Heart left ventricle (tissue), 16 donors: ENCODE measurements at regions of chr4 and their contacts with region 1.

Region 1: DNA sequence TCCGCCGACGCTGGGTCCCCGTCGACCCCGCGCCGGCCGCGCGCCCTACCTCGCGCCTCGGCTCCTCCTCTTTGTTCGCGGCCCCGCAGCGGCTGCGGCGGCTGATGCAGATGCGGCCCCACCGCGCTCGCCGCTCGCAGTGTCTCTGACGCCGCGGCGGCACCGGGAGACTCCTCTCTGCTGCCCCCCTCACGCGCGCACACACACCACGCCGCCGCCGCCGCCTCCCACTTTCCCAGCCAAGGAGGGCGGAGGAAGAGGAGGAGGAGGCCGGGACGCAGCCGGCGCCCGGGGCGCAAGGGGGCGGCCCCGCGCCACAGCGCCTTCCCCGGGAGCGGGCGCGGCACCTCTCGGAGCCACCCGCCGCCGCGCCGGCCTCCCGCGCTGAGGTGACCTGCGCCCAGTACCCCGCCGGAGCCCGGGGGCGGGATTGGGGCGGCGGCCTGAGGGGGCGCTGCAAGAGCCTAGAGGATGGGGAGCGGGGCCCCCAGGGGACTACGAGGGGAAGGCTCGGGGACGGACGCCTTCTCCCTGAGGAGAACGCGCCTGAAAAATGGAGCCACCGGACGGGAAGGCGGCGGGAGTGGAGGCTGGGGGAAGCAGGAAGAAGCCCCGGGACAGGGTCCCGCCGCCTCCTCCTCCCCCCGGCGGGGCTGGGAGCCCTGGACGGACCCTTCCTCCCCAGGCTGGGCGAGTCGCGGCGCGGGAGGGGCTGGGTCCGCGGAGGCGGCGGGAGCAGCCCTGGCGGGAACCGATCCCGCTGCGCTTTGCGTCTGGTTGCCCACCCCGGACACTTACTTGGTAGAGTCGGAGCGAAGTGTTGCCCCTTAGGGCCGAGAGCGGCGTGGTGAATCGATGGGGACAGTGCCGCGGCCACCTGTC is at the start of gene SH3RF1:
- DNase-seq: peak; percentile 91 to 94 (median 92)
- ATAC-seq: peak; percentile 96 to 98 (median 96)
- H3K4me3 ChIP-seq: peak within 1 kb of the TSS; percentile 73 to 99 (median 92)
- H3K27ac ChIP-seq: peak within 1 kb of the TSS; percentile 87 to 95 (median 92)
- H3K4me1 ChIP-seq: peaks cover 0 to 47% (median 21%) of the 10 kb centered on the region in 12 donors
- H3K27me3 ChIP-seq: no peaks in the 10 kb centered on the region
- CTCF ChIP-seq: peak in 10 of 12 donors; percentile 27 to 58 (median 44)
- POLR2A ChIP-seq: peak; percentile 7 to 87
- total RNA-seq, gene SH3RF1: 7.1 to 17.2 (median 10.2) TPM

Region 2: GRCh38 chr4:169010125-169011023 is 260.7 kb before region 1 on chr4 and contains the start of gene CBR4:
- intact Hi-C with region 1: loop called in 2 of 10 experiments (anchors 5 kb)
- DNase-seq: peak; percentile 97 to 99 (median 99)
- ATAC-seq: peak; percentile 99
- H3K4me3 ChIP-seq: peak within 1 kb of the TSS; percentile 49 to 89 (median 74)
- H3K27ac ChIP-seq: peak within 1 kb of the TSS; percentile 76 to 98 (median 94)
- H3K4me1 ChIP-seq: peaks cover 0 to 45% (median 27%) of the 10 kb centered on the region in 12 donors
- H3K27me3 ChIP-seq: no peaks in the 10 kb centered on the region
- CTCF ChIP-seq: peak in 9 of 12 donors; percentile 24 to 49 (median 39)
- POLR2A ChIP-seq: peak in 1 of 2 donors; percentile 95
- total RNA-seq, gene CBR4: 17.2 to 26.5 (median 24.2) TPM

Region 3: DNA sequence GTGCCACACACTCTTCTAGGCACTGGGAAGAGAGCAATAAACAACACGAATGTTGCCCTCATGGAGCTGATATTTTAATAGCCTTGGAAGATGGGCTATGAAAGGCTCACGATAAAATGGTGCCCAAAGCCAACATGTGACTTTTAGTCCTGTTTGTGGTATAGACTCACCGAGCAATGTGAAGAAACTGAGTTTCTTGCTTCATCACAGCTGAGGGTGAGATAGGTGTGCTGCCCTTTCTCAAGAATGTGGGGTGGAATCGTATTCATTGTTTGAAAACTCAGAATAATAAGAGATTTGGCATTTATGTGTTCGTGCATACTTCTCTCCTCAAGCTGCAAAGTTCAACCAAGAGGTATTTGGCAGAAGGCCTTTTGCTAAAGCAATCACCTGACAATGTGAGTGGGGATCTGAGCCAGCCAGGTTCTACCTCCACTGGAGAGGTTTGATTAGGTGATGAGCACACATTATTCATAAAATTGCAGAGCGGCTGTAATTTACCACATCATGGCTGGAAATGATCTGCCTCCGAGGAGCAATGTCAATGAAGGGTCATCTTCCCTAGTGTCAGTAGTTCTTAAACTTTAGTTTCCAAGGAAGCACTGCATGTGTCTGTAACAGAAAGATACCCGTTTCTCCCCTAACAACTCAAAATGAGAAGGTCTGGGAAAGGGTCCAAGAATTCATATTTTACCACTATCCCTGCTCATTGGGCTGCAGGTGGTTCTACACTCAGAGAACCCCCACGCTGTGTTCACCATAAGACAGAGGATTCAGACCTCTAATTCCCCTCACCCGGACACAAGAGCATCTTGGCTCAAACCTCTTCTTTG is 219.1 kb before region 1 on chr4:
- intact Hi-C with region 1: loop called in 2 of 10 experiments (anchors 2 to 10 kb)
- DNase-seq: no peak
- ATAC-seq: no peak
- H3K4me3 ChIP-seq: no peak overlapping the region
- H3K27ac ChIP-seq: peak overlapping the region in 10 of 12 donors; percentile 71 to 92 (median 80)
- H3K4me1 ChIP-seq: peaks cover 17 to 44% (median 29%) of the 10 kb centered on the region in 12 donors
- H3K27me3 ChIP-seq: no peaks in the 10 kb centered on the region
- CTCF ChIP-seq: no peak
- POLR2A ChIP-seq: no peak

Region 4: GRCh38 chr4:169133932-169134331 is 137.1 kb before region 1 on chr4:
- intact Hi-C with region 1: loop called in 6 of 10 experiments (anchors 5 to 10 kb)
- DNase-seq: peak in 1 of 5 donors; percentile 10
- ATAC-seq: peak; percentile 63 to 89 (median 76)
- H3K4me3 ChIP-seq: no peak overlapping the region
- H3K27ac ChIP-seq: peak overlapping the region in 10 of 12 donors; percentile 24 to 70 (median 50)
- H3K4me1 ChIP-seq: peaks cover 0 to 66% (median 19%) of the 10 kb centered on the region in 12 donors
- H3K27me3 ChIP-seq: no peaks in the 10 kb centered on the region
- CTCF ChIP-seq: no peak
- POLR2A ChIP-seq: no peak

Region 5: DNA sequence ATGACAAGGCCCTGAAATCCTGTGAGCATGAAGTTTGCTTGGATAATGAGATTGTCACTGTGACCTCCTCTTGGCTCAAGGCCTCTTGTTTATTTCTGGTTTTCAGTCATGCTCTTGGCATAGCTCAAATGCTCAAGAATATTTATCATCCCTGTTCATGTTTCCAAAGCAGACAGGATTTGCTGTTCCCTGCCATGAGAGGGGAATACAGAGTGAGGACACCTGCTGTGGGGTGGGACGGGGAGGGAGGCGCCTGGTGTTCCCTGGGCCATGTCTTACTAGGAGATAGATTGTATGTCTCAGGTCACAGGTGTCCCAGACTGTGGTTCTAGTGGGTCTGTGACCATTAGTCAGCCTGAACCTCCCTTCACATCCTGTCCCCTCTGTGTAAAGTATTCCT is 34.6 kb after region 1 on chr4:
- intact Hi-C with region 1: loop called in 3 of 10 experiments (anchors 5 kb)
- DNase-seq: peak in 2 of 5 donors; percentile 23 to 26
- ATAC-seq: peak; percentile 64 to 92 (median 80)
- H3K4me3 ChIP-seq: no peak overlapping the region
- H3K27ac ChIP-seq: peak overlapping the region in 6 of 12 donors; percentile 18 to 69 (median 59)
- H3K4me1 ChIP-seq: peaks cover 0 to 12% (median 5%) of the 10 kb centered on the region in 12 donors
- H3K27me3 ChIP-seq: no peaks in the 10 kb centered on the region
- CTCF ChIP-seq: no peak
- POLR2A ChIP-seq: no peak

Region 6: DNA sequence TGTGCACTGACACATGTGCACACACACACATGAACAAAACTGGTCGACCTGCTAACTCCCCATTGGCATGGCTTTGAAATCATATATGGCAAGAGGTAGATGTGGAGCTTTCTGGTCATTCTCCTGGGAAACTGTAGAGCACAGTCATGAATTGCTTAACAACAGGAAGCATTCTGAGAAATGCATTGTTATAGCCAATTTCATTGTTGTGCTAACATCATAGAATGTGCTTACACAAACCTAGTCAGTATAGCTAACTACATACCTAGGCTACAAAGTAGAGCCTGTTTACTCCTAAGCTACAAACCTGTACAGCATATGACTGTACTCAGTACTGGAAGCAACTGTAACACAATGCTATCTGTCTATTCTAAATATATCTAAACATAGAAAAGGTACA is 133.9 kb after region 1 on chr4:
- intact Hi-C with region 1: loop called in 2 of 10 experiments (anchors 5 to 10 kb)
- DNase-seq: no peak
- ATAC-seq: no peak
- H3K4me3 ChIP-seq: no peak overlapping the region
- H3K27ac ChIP-seq: no peak overlapping the region
- H3K4me1 ChIP-seq: peaks cover 0 to 6% (median 0%) of the 10 kb centered on the region in 12 donors
- H3K27me3 ChIP-seq: no peaks in the 10 kb centered on the region
- CTCF ChIP-seq: no peak
- POLR2A ChIP-seq: no peak

Region 7: GRCh38 chr4:169485791-169486742 is 215.0 kb after region 1 on chr4:
- intact Hi-C with region 1: loop called in 6 of 10 experiments (anchors 2 to 10 kb)
- DNase-seq: no peak
- ATAC-seq: peak in 2 of 4 donors; percentile 53 to 63
- H3K4me3 ChIP-seq: peak overlapping the region in 1 of 12 donors; percentile 8
- H3K27ac ChIP-seq: no peak overlapping the region
- H3K4me1 ChIP-seq: peaks cover 0 to 5% (median 0%) of the 10 kb centered on the region in 12 donors
- H3K27me3 ChIP-seq: no peaks in the 10 kb centered on the region
- CTCF ChIP-seq: peak; percentile 18 to 72 (median 58)
- POLR2A ChIP-seq: no peak